GM12878 (cell line): ENCODE measurements at regions of chr17 and their contacts with region 1.

Region 1: DNA sequence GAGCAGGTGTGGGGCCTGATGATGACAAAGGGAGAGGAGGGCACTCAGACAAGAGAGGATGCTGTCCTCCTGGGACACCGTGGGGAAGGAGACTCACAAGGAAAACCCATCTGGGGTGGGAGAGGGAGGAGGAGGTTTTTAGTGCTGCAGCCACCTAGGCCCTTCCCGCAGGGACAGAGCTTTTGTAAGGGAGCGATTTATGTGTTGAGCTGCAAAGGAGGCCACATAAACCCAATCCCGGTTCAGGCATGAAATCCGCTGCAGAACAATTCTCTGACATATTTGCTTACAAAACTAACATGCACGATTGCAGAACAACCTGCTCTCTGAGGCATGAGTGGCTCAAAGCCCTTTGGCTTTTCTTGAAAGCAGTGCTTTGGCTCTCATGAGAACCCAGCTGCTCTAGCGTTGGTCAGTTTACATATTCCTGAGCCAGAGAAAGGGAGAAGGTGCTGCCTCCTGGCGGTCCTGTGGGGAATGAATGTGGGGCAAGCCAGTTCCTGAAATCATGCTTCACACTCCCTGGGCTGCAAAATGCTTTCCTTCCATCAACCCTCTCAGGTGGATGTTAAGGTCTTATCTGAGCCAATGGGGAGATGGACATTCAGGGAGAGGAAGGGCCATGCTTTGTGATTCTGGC is 122.4 kb upstream of the NLRP1 start:
- DNase-seq: peak; percentile 8
- ATAC-seq: peak; percentile 82
- H3K4me3 ChIP-seq: no peak overlapping the region
- H3K27ac ChIP-seq: no peak overlapping the region
- H3K4me1 ChIP-seq: no peaks in the 10 kb centered on the region
- H3K27me3 ChIP-seq: peaks cover under 1 to 2% of the 10 kb centered on the region in 2 experiments; a peak in 3 of 4 replicates
- CTCF ChIP-seq: peak; percentile 82 to 92 (median 87)
- EP300 ChIP-seq: no peak
- POLR2A ChIP-seq: no peak
- RAD21 ChIP-seq: peak; percentile 68

Region 2: DNA sequence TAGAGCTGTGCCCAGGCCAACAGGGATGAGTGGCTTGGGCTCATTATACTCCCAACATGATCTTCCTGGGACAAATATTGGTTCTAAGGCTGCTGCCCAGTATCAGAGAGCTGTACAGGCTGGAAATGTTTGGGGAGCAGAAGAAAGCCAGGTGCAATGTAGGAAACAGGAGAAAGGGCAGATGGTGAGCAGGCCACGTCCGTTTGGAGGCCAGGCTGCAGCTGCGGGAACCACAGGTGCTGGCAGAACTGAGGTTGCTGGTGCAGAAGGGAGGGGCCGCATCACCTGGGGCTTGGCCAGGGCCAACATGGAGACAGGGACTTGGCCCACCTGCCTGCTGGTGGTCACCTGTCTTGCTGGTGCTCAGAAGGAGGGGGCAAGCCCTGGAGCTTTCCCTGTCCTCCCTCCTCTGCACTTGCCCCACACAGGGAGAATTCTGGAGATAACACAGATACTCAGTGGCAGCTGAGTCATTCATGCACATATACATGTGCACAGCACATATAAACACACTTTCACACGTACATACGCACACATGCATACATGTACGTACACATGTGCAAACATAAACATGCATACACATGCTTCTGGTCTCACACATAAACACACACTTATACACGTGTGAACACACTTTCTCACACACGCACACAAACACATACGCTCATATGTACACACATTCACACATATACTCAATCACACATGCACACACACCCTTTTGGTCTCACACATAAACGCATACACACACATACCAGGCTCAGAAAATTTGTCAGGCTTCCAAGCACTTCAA is 431.2 kb after region 1 on chr17:
- CTCF ChIA-PET with region 1: no interaction called
- POLR2A ChIA-PET with region 1: no interaction called
- RAD21 ChIA-PET with region 1: no interaction called
- SMC1A ChIA-PET with region 1: no interaction called
- in situ Hi-C with region 1: no loop called
- intact Hi-C with region 1: no loop called
- DNase-seq: no peak
- ATAC-seq: no peak
- H3K4me3 ChIP-seq: no peak overlapping the region
- H3K27ac ChIP-seq: no peak overlapping the region
- H3K4me1 ChIP-seq: no peaks in the 10 kb centered on the region
- H3K27me3 ChIP-seq: 0 out of 4 replicates have a peak, but pooled peaks cover 0 to 1% of the 10 kb centered on the region in 2 experiments
- CTCF ChIP-seq: no peak
- EP300 ChIP-seq: no peak
- POLR2A ChIP-seq: no peak
- RAD21 ChIP-seq: no peak

Region 3: DNA sequence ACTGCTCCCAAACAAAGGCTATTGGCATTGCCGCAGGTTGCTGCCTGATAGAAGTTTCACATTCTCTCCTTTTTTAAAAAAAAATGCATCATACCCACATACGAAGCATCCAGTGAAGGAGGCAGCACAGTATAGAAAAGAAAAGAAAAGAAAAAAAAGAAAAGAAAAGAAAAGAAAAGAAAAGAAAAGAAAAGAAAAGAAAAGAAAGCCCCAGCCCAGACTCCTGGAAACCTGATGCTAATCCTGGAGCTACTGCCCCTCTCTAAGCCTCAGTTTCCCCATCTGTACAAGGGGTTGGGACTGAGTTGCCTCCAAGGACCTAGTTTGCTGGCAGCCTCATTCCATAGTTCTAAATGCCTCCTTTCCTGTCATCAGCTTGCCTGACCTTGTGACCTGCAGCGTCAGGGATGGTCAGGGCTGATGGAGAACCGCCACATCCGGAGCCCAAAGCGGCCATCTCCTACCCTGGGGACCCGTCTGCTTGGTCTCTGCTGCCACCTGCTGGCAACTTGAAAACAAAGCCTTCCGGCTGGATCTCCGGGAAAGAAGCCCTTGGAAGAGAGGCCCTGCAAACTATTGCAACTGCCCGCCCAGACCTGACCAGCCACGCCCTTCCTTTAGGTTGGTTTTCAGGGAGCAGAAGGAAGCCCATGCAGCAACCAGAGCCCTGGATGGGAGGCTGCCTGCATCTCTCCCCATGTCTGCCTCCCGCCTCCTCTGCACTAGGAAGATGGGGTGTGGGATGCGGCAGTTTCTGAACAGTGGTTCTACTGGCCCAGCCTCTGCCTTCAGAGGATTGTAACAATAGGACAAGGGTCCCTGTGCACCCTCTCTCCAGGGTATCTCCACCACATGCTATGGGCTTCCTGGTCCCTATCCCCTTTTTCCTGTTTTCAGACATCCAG is 715.3 kb after region 1 on chr17:
- CTCF ChIA-PET with region 1: interaction called, 7 read pairs
- POLR2A ChIA-PET with region 1: no interaction called
- RAD21 ChIA-PET with region 1: no interaction called
- SMC1A ChIA-PET with region 1: no interaction called
- in situ Hi-C with region 1: loop called (anchors 25 kb)
- intact Hi-C with region 1: loop called (anchors 5 kb)
- DNase-seq: no peak
- ATAC-seq: peak; percentile 96
- H3K4me3 ChIP-seq: no peak overlapping the region
- H3K27ac ChIP-seq: no peak overlapping the region
- H3K4me1 ChIP-seq: peaks cover 1% of the 10 kb centered on the region
- H3K27me3 ChIP-seq: no peaks in the 10 kb centered on the region; a peak in 2 of 4 replicates
- CTCF ChIP-seq: peak; percentile 75 to 92 (median 83)
- EP300 ChIP-seq: no peak
- POLR2A ChIP-seq: no peak
- RAD21 ChIP-seq: peak; percentile 94